ENCODE measurements at regions of chr1 and their contacts with region 1.

Region 1: DNA sequence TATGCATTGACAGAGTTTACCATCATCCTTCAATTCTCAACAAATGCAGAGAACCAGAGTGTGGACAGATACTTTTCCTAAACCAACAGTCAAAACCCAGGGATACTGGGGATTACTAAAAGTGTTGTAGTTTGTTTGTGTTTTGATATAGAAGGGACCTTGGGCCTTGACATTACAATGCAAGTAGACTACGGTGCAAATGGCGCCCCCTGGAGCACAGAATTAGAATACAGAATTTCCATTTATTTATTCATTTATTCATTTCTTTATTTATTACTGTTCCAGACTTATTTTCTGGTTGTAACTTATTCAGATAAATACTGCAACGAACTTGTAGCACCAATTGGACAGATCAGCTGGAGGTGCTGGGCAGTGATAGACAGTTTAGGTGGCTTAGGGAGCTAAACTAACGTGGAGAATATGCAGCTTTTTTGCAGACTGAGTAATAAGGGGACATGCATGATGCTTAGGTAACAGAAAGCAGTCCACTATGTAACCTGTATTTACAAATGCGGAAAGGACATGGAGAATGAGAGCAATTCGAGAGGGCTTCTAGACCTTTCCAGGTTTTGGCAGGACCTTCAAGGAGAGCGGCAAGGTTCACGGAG is 42.6 kb downstream of the KIRREL1 start:
- DNase-seq: peak in 1 of 2 donors; percentile 35
- ATAC-seq: peak in 5 of 8 donors; percentile 24 to 55 (median 49)
- H3K4me3 ChIP-seq: no peak overlapping the region
- H3K27ac ChIP-seq: peak overlapping the region in 1 of 10 donors; percentile 9
- H3K4me1 ChIP-seq: peaks cover 2 to 54% (median 29%) of the 10 kb centered on the region in 9 donors
- H3K27me3 ChIP-seq: no peaks in the 10 kb centered on the region
- CTCF ChIP-seq: peak; percentile 52 to 85 (median 76)

Region 2: DNA sequence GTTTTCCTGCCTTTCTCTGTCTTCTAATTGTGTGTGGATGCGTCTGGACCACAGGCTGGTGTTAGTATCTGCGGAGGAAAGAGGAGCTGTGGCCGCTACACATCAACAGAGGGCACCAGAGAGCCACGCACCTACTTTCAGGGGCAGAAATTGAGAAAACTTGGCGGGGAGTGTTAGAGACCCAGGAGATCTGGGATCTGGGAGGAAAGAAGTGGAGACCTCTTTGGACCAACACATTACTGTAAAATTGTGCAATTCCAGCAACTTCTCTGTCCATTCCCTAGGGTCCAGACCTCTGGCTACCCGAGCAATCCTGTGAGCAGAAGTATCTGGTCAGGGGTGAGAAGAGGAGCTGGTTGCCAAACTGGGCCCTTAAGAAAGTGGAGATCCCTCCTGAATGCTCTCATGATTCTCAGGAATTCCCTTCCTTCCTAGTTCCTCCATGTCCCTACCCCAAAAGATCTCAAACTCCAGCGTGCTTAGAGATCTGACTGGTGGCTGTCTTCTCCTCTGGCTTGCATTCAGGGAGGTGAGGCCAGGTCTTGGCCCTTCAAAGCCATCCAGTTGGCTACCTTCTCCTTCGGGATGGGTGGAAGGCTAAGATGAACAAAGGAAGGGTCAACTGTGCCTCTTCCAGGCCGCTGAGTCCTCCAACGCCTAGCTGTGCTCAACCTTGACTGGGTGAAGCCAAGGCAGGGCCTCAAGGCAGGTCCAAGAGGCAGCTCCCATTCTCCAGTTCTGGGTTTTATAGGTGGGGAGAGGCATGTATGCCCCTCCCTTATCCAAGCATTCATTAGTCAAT is 43.8 kb before region 1 on chr1:
- intact Hi-C with region 1: loop called (anchors 1 to 5 kb)
- DNase-seq: peak; percentile 72 to 77
- ATAC-seq: peak; percentile 64 to 83 (median 70)
- H3K4me3 ChIP-seq: peak overlapping the region in 2 of 10 donors; percentile 66 to 95
- H3K27ac ChIP-seq: peak overlapping the region in 9 of 10 donors; percentile 39 to 94 (median 55)
- H3K4me1 ChIP-seq: peaks cover 4 to 47% (median 18%) of the 10 kb centered on the region in 9 donors
- H3K27me3 ChIP-seq: peaks cover 0 to 31% (median 6%) of the 10 kb centered on the region in 7 donors
- CTCF ChIP-seq: peak; percentile 84 to 98 (median 95)

Region 3: GRCh38 chr1:158095737-158096335 is 59.8 kb after region 1 on chr1:
- intact Hi-C with region 1: no loop called
- DNase-seq: no peak
- ATAC-seq: peak in 6 of 8 donors; percentile 43 to 62 (median 54)
- H3K4me3 ChIP-seq: no peak overlapping the region
- H3K27ac ChIP-seq: peak overlapping the region in 1 of 10 donors; percentile 10
- H3K4me1 ChIP-seq: peaks cover 0 to 16% (median 2%) of the 10 kb centered on the region in 9 donors
- H3K27me3 ChIP-seq: no peaks in the 10 kb centered on the region
- CTCF ChIP-seq: peak; percentile 40 to 77 (median 64)

Region 4: GRCh38 chr1:160031365-160032164 is 1995.5 kb after region 1 on chr1 and contains the start of gene PIGM:
- intact Hi-C with region 1: no loop called
- DNase-seq: peak; percentile 93 to 94
- ATAC-seq: peak; percentile 95 to 98 (median 97)
- H3K4me3 ChIP-seq: peak within 1 kb of the TSS; percentile 61 to 89 (median 76)
- H3K27ac ChIP-seq: peak within 1 kb of the TSS in 9 of 10 donors; percentile 55 to 86 (median 74)
- H3K4me1 ChIP-seq: peaks cover 4 to 34% (median 22%) of the 10 kb centered on the region in 9 donors
- H3K27me3 ChIP-seq: no peaks in the 10 kb centered on the region
- CTCF ChIP-seq: no peak
- total RNA-seq, gene PIGM: 2.0 to 3.0 (median 2.5) TPM

Measured in heart right ventricle (tissue), 16 donors.